Naive thymus-derived CD4-positive, alpha-beta T cell (primary cell): ENCODE measurements at regions of chr14 and their contacts with region 1.

Region 1: DNA sequence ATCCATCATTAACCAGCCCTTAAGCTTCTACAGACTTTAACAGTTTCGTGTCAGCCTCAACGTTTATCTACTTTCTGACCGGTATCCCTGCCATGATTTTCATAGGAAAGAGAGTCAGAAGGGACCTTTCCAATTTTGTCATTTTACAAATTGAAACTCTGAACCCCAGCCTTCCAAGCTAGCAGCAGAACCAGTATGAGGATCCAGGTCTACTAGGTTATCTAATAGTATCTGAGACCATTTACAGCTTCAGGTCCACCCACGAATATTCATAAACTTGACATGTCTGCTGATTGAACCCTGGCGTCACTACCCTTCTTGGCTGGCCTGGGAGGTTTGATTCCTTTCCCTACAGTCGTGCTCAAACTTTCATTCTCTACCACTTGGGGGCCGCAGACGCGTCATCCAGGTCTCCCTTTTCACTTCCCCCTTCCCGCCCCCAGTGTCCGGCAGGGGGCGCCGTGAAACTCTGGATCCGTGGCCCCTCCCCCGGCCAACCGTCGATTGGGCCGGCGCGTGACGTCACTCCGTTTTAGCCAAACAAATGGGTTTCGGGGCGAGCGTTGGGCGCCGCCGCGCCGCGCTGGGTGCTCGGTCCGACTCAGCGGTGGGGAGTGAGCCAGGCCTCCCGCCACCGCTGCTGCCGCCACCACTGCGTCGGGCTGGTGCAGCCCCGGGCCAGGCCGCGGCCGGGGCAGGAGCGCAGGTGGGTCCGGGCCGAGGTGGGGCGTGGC is at the start of gene FBXO34:
- DNase-seq: peak; percentile 96 to 100 (median 99)
- ATAC-seq: peak; percentile 96
- H3K4me3 ChIP-seq: peak within 1 kb of the TSS; percentile 64
- H3K4me3 Mint-ChIP-seq: peak within 1 kb of the TSS; percentile 85 to 94 (median 92)
- H3K27ac ChIP-seq: peak within 1 kb of the TSS; percentile 88
- H3K27ac Mint-ChIP-seq: peak within 1 kb of the TSS; percentile 85 to 96 (median 94)
- H3K4me1 ChIP-seq: peaks cover 4 to 19% of the 10 kb centered on the region in 2 donors
- H3K4me1 Mint-ChIP-seq: peaks cover 19 to 48% (median 40%) of the 10 kb centered on the region in 7 donors
- H3K27me3 ChIP-seq: no peaks in the 10 kb centered on the region
- H3K27me3 Mint-ChIP-seq: peaks cover 0 to 3% (median 0%) of the 10 kb centered on the region in 5 donors
- total RNA-seq, gene FBXO34: 22.0 to 27.3 (median 25.8) TPM

Region 2: GRCh38 chr14:54902521-54903420 is 368.2 kb before region 1 on chr14 and contains the start of gene GCH1:
- CTCF ChIA-PET with region 1: no interaction called
- POLR2A ChIA-PET with region 1: no interaction called
- intact Hi-C with region 1: loop called (anchors 10 kb)
- DNase-seq: peak; percentile 63 to 85 (median 71)
- ATAC-seq: peak; percentile 88
- H3K4me3 ChIP-seq: peak within 1 kb of the TSS; percentile 99
- H3K4me3 Mint-ChIP-seq: peak within 1 kb of the TSS; percentile 82 to 94 (median 90)
- H3K27ac ChIP-seq: peak within 1 kb of the TSS; percentile 88
- H3K27ac Mint-ChIP-seq: peak within 1 kb of the TSS; percentile 66 to 95 (median 91)
- H3K4me1 ChIP-seq: peaks cover under 1 to 9% of the 10 kb centered on the region in 2 donors
- H3K4me1 Mint-ChIP-seq: peaks cover 15 to 43% (median 31%) of the 10 kb centered on the region in 7 donors
- H3K27me3 ChIP-seq: no peaks in the 10 kb centered on the region
- H3K27me3 Mint-ChIP-seq: no peaks in the 10 kb centered on the region
- total RNA-seq, gene GCH1: 21.4 to 64.1 (median 23.2) TPM

Region 3: DNA sequence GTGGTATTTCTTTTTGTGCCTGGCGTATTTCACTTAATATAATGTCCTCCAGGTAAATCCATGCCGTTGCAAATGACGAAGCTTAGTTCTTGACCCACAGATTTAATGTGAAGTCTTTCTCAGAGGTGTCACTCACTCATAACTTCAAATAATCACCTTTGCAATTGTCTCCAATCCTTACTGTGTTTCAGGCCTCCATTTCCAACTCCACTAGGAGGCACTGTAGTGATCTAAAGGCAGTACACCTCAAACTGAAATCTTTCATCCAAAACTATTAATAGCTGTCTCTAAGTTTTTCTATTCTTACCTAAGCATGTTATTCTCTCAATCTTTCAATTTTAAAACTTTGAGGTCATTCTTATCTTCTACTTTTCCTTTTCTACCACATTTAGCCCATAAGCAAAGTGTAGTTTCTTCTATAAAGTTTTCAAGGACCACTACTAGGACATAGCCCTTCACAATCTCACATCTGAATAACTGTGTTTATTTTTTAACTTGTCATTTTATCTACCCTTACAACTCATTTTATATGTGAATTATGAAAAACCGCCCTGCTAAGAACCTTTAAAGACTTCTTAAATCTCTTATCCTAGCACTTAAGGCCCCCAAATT is 25.2 kb before region 1 on chr14:
- CTCF ChIA-PET with region 1: interaction called, 8 read pairs
- POLR2A ChIA-PET with region 1: no interaction called
- intact Hi-C with region 1: loop called in 1 of 2 experiments (anchors 1 kb)
- DNase-seq: peak in 7 of 9 donors; percentile 15 to 52 (median 34)
- ATAC-seq: peak; percentile 75
- H3K4me3 ChIP-seq: no peak overlapping the region
- H3K4me3 Mint-ChIP-seq: no peak overlapping the region
- H3K27ac ChIP-seq: no peak overlapping the region
- H3K27ac Mint-ChIP-seq: no peak overlapping the region
- H3K4me1 ChIP-seq: no peaks in the 10 kb centered on the region
- H3K4me1 Mint-ChIP-seq: no peaks in the 10 kb centered on the region
- H3K27me3 ChIP-seq: no peaks in the 10 kb centered on the region
- H3K27me3 Mint-ChIP-seq: peaks cover 8 to 45% (median 12%) of the 10 kb centered on the region in 5 donors

Region 4: DNA sequence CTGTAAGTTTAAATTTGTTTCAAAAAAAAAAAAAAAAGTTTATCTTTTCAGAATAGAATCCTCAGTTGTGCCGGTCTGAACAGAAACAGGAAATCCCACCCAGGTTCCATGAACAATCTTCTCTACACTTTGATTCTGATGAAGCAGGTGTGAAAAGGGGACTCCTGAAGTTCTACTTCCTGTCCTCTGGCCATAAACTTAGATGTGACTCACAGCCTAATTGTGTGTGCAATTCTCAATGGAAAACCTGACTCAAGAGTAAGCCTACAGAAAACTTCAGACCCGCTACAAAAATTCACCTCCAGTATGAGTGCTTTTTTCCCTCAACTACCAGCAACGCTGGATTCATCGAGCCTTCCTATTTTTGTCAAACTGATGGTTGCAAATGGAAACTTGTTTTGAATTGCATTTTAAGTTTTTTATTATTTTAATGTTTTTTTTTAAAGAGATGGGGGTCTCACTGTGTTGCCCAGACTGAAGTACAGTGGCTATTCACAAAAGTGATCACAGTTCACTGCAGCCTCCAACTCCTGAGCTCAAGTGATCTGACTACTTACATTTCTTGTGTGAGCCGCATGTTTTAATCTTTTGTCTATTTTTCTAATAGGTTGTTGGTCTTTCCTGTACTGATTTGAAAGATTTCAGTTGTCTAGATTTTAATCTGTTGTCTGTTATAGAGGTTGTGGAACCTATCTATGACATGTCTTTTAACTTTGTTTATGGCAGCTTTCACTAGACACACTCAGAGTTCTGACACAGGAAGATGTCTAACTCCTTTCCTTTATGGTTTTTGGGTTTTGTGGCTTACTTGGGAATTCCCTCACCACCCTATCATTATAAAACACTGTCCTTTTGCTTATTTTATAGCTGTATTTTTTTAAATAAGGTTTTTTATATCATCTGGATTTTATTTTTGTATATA is 103.0 kb after region 1 on chr14:
- CTCF ChIA-PET with region 1: interaction called, 4 read pairs
- POLR2A ChIA-PET with region 1: no interaction called
- intact Hi-C with region 1: loop called in 1 of 2 experiments (anchors 1 kb)
- DNase-seq: peak in 8 of 9 donors; percentile 18 to 76 (median 58)
- ATAC-seq: peak; percentile 93
- H3K4me3 ChIP-seq: no peak overlapping the region
- H3K4me3 Mint-ChIP-seq: peak overlapping the region in 9 of 10 donors; percentile 22 to 82 (median 54)
- H3K27ac ChIP-seq: peak overlapping the region; percentile 64
- H3K27ac Mint-ChIP-seq: peak overlapping the region; percentile 75 to 94 (median 83)
- H3K4me1 ChIP-seq: peaks cover 12 to 20% of the 10 kb centered on the region in 2 donors
- H3K4me1 Mint-ChIP-seq: peaks cover 13 to 44% (median 30%) of the 10 kb centered on the region in 7 donors
- H3K27me3 ChIP-seq: no peaks in the 10 kb centered on the region
- H3K27me3 Mint-ChIP-seq: no peaks in the 10 kb centered on the region

Region 5: GRCh38 chr14:55458800-55459515 is 188.0 kb after region 1 on chr14:
- CTCF ChIA-PET with region 1: no interaction called
- POLR2A ChIA-PET with region 1: no interaction called
- intact Hi-C with region 1: no loop called
- DNase-seq: no peak
- ATAC-seq: peak; percentile 26
- H3K4me3 ChIP-seq: no peak overlapping the region
- H3K4me3 Mint-ChIP-seq: no peak overlapping the region
- H3K27ac ChIP-seq: no peak overlapping the region
- H3K27ac Mint-ChIP-seq: no peak overlapping the region
- H3K4me1 ChIP-seq: no peaks in the 10 kb centered on the region
- H3K4me1 Mint-ChIP-seq: no peaks in the 10 kb centered on the region
- H3K27me3 ChIP-seq: no peaks in the 10 kb centered on the region
- H3K27me3 Mint-ChIP-seq: peaks cover 0 to 10% (median 2%) of the 10 kb centered on the region in 5 donors

Region 6: GRCh38 chr14:55556929-55557623 is 286.1 kb after region 1 on chr14:
- CTCF ChIA-PET with region 1: no interaction called
- POLR2A ChIA-PET with region 1: no interaction called
- intact Hi-C with region 1: no loop called
- DNase-seq: no peak
- ATAC-seq: no peak
- H3K4me3 ChIP-seq: no peak overlapping the region
- H3K4me3 Mint-ChIP-seq: no peak overlapping the region
- H3K27ac ChIP-seq: no peak overlapping the region
- H3K27ac Mint-ChIP-seq: no peak overlapping the region
- H3K4me1 ChIP-seq: no peaks in the 10 kb centered on the region
- H3K4me1 Mint-ChIP-seq: no peaks in the 10 kb centered on the region
- H3K27me3 ChIP-seq: no peaks in the 10 kb centered on the region
- H3K27me3 Mint-ChIP-seq: no peaks in the 10 kb centered on the region

Region 7: GRCh38 chr14:55579724-55580469 is 308.9 kb after region 1 on chr14 and contains the start of gene KTN1:
- CTCF ChIA-PET with region 1: no interaction called
- POLR2A ChIA-PET with region 1: no interaction called
- intact Hi-C with region 1: loop called (anchors 1 to 10 kb)
- DNase-seq: peak; percentile 77 to 90 (median 88)
- ATAC-seq: peak; percentile 94
- H3K4me3 ChIP-seq: peak within 1 kb of the TSS; percentile 93
- H3K4me3 Mint-ChIP-seq: peak within 1 kb of the TSS; percentile 93 to 98 (median 95)
- H3K27ac ChIP-seq: peak within 1 kb of the TSS; percentile 86
- H3K27ac Mint-ChIP-seq: peak within 1 kb of the TSS; percentile 90 to 97 (median 93)
- H3K4me1 ChIP-seq: peaks cover 20 to 34% of the 10 kb centered on the region in 2 donors
- H3K4me1 Mint-ChIP-seq: peaks cover 20 to 28% (median 27%) of the 10 kb centered on the region in 7 donors
- H3K27me3 ChIP-seq: no peaks in the 10 kb centered on the region
- H3K27me3 Mint-ChIP-seq: no peaks in the 10 kb centered on the region
- total RNA-seq, gene KTN1: 87.3 to 131 (median 105) TPM

Region 8: GRCh38 chr14:56579345-56580220 is 1308.6 kb after region 1 on chr14 and contains the start of gene TMEM260:
- CTCF ChIA-PET with region 1: no interaction called
- POLR2A ChIA-PET with region 1: no interaction called
- intact Hi-C with region 1: loop called in 1 of 2 experiments (anchors 5 kb)
- DNase-seq: peak; percentile 83 to 95 (median 92)
- ATAC-seq: peak; percentile 98
- H3K4me3 ChIP-seq: peak within 1 kb of the TSS; percentile 83
- H3K4me3 Mint-ChIP-seq: peak within 1 kb of the TSS; percentile 87 to 97 (median 95)
- H3K27ac ChIP-seq: peak within 1 kb of the TSS; percentile 88
- H3K27ac Mint-ChIP-seq: peak within 1 kb of the TSS; percentile 90 to 98 (median 96)
- H3K4me1 ChIP-seq: peaks cover 19 to 22% of the 10 kb centered on the region in 2 donors
- H3K4me1 Mint-ChIP-seq: peaks cover 33 to 45% (median 42%) of the 10 kb centered on the region in 7 donors
- H3K27me3 ChIP-seq: no peaks in the 10 kb centered on the region
- H3K27me3 Mint-ChIP-seq: no peaks in the 10 kb centered on the region
- total RNA-seq, gene TMEM260: 20.8 to 39.0 (median 27.4) TPM